PC-3 (cell line): ENCODE measurements at regions of chr3 and their contacts with region 1.

Region 1: DNA sequence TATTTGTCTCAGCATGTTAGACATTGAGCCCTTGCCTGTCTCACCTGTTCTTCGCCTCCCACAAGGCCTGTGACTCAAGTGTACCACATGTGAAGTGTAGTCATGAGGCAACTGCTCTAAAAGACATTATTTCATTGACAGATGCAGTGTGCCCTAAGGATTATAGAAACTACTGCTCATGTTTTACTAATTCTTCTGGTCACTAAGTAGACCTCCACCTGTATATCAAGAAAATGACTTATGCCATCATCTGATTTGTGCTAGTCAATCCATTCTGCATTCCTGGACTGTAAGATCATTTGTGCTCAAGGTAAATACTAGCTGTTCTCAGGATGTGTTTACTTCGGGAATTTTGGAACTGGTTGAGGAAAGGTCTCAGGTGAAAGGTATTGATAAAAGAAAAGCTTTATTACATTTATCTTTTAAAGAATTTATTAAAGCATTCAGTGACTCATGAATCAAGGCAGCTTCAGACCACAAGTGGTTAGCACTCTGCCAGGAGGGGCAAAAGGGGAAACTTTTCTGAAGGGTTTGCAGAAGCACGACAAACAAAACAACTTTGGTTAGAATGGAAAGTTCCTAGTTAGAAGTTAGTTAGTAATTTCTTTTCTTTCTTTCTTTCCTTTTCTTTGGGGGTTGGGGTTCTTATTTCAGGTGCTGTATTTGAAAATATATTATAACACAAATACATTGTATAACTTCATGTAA is 465.3 kb upstream of the CBLB start:
- DNase-seq: peak; percentile 94
- ATAC-seq: peak; percentile 74
- H3K4me3 ChIP-seq: peak overlapping the region; percentile 11; the same call in 1 of the 2 replicates
- H3K27ac ChIP-seq: peak overlapping the region; percentile 68
- H3K4me1 ChIP-seq: peaks cover 65% of the 10 kb centered on the region
- H3K27me3 ChIP-seq: no peaks in the 10 kb centered on the region
- CTCF ChIP-seq: no peak

Region 2: DNA sequence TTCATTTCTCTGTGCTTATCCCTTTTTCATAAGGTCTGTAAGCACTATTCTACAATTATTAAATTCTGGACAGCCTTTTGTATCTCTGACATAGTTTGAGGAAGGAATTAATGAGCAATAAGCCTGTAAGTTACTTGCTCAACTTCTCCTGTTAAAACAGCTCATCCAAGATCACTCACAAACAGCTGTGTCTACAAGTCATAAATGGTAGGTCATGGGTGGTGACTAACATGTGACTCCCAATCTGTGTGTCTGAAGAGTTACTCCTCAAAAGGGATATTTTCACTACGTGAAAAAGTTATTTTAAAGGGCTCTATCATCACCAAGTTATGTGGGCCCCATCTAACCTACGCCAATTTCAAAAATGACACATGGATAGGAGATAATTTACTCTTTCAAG is 320.1 kb before region 1 on chr3:
- CTCF ChIA-PET with region 1: no interaction called
- POLR2A ChIA-PET with region 1: no interaction called
- intact Hi-C with region 1: no loop called
- DNase-seq: peak; percentile 98
- ATAC-seq: peak; percentile 97
- H3K4me3 ChIP-seq: no peak overlapping the region
- H3K27ac ChIP-seq: peak overlapping the region; percentile 95
- H3K4me1 ChIP-seq: peaks cover 22% of the 10 kb centered on the region
- H3K27me3 ChIP-seq: no peaks in the 10 kb centered on the region
- CTCF ChIP-seq: no peak

Region 3: DNA sequence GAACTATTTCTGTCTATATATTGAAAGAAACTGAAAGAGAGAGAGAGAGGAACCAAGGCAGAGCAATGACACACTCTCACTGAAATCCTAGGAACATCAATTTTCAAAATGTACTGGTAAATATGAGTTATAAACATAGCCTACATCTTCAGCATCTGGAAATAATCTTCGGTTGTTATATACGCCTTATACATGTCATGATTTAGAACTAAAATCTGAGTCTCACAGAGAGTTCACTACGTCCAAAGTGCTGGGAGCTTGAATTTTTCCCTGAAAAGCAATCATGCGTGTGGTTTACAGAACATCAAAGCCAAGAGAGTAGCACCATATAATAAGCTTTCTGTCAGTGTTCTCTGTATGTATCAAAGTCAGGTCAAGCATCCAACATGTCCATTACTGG is 45.3 kb before region 1 on chr3:
- CTCF ChIA-PET with region 1: no interaction called
- POLR2A ChIA-PET with region 1: no interaction called
- intact Hi-C with region 1: no loop called
- DNase-seq: no peak
- ATAC-seq: no peak
- H3K4me3 ChIP-seq: no peak overlapping the region
- H3K27ac ChIP-seq: no peak overlapping the region
- H3K4me1 ChIP-seq: no peaks in the 10 kb centered on the region
- H3K27me3 ChIP-seq: no peaks in the 10 kb centered on the region
- CTCF ChIP-seq: no peak

Region 4: DNA sequence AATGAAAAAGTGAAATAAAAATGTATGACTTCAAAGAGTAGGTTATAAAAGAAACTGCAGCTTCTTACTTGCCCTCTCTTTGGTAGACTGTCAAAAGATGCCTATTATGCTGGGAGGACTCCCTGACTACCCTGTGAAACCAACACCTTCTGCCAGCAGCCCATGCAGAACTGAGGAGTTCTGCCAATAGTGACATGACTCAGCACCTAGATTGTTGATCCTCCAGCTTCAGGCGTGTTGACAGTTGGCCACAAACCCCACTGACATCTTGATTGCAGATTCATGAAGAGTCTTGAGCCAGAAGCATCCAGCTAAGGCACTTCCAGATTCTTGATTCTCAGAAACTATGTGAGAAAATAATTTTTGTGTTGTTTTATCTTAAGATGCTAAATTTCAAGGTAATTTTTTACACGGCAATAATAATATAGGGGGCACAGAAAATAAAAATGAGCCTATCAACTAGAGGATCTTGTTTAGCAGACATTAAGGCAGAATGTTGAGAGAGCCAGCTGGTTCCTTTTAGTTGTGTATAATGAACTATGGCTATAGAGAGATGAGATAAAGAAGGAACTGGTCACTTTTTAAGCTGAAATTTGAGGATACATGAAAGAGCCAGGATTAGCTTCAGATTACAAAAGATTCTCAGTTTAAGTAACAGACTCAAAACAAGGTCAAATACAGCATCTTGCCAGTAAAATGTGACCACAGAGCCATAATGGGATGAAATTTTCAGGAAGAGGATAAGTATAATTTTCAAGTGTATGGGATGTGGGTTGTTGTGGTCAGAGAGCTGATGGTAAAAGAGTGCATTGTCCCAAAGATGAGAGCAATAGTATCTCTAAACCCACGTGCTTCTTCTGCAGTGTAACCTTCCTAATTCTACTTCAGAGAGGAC is 123.5 kb after region 1 on chr3:
- CTCF ChIA-PET with region 1: no interaction called
- POLR2A ChIA-PET with region 1: no interaction called
- intact Hi-C with region 1: loop called (anchors 2 kb)
- DNase-seq: peak; percentile 96
- ATAC-seq: peak; percentile 100
- H3K4me3 ChIP-seq: no peak overlapping the region
- H3K27ac ChIP-seq: no peak overlapping the region
- H3K4me1 ChIP-seq: peaks cover 8% of the 10 kb centered on the region; the same call in 1 of the 2 replicates
- H3K27me3 ChIP-seq: no peaks in the 10 kb centered on the region
- CTCF ChIP-seq: no peak